ENCODE measurements at regions of chrX and their contacts with region 1.

Region 1: GRCh38 chrX:150486011-150486410 is 82.4 kb upstream of the MTM1 start:
- DNase-seq: peak in 4 of 5 donors; percentile 22 to 57 (median 40)
- ATAC-seq: peak in 3 of 4 donors; percentile 64 to 73 (median 68)
- H3K4me3 ChIP-seq: no peak overlapping the region
- H3K27ac ChIP-seq: no peak overlapping the region
- H3K4me1 ChIP-seq: no peaks in the 10 kb centered on the region
- H3K27me3 ChIP-seq: no peaks in the 10 kb centered on the region
- CTCF ChIP-seq: peak; percentile 40 to 64 (median 54)
- POLR2A ChIP-seq: no peak

Region 2: DNA sequence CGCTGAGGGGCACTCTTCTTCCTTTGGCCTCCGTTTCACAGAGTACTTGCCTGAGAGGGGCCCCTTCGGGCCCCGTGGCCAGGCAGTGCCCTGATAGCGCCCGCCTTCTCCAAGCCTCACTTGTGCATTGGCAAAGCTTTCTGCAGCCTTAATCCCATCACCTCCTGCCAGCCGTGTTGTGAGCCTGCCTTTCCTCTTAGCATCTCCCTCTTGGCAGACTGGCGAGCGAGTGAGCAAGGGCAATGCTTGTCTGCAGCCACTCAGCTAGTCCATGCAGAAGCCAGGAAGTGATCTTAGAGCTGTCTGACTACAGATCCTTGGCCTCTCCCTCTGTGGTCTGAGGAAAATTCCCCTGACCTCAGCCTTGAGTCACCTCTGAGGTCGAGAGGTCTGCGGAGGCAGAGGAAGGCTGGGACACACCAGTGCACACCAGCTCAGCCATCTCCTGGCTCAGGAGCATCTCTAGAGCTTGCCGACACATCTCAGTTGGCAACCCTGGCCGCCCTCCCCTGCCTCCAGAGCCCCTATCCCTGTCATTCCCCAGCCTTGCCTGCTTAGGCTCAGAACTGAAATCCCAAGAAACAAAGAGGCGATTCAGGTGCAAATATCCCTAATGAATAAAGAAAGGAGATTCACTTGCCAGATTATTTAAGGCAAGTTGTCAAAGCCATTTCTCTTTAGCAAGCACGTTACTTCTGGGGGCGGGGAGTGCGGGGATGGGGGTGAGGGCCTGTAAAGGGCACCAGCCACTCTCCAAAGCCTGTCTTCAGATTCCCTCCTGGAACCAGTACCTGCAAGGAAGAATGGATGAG is 266.4 kb before region 1 on chrX:
- intact Hi-C with region 1: loop called in 2 of 10 experiments (anchors 10 kb)
- DNase-seq: peak in 1 of 5 donors; percentile 38
- ATAC-seq: peak in 1 of 4 donors; percentile 33
- H3K4me3 ChIP-seq: no peak overlapping the region
- H3K27ac ChIP-seq: no peak overlapping the region
- H3K4me1 ChIP-seq: no peaks in the 10 kb centered on the region
- H3K27me3 ChIP-seq: peaks cover 0 to 8% (median 0%) of the 10 kb centered on the region in 9 donors
- CTCF ChIP-seq: no peak
- POLR2A ChIP-seq: no peak

Region 3: DNA sequence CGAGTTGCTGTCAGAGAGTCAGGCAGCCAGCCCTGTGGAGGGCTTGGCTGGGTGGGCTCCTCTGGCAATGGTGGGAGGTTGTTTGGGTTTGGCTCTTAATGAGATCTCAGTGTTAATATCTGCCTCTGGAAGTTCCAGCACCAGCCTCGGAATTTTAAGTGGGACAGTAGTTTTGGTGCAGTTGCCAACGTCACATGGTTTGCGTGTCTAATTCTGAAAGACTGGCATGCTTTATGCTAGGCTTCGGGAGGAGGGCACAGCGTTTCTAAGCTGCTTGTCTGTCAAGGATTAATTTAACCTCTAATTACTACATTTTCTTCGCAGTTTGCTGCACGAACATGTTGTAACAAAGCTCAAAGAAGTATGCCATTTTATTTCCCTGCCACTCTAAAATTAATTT is 113.7 kb before region 1 on chrX:
- intact Hi-C with region 1: loop called in 6 of 10 experiments (anchors 5 to 10 kb)
- DNase-seq: no peak
- ATAC-seq: peak in 1 of 4 donors; percentile 37
- H3K4me3 ChIP-seq: no peak overlapping the region
- H3K27ac ChIP-seq: peak overlapping the region in 1 of 12 donors; percentile 58
- H3K4me1 ChIP-seq: peaks cover 0 to 5% (median 0%) of the 10 kb centered on the region in 12 donors
- H3K27me3 ChIP-seq: no peaks in the 10 kb centered on the region
- CTCF ChIP-seq: no peak
- POLR2A ChIP-seq: no peak